OCI-LY7 (cell line): ENCODE measurements at regions of chr4 and their contacts with region 1.

Region 1: DNA sequence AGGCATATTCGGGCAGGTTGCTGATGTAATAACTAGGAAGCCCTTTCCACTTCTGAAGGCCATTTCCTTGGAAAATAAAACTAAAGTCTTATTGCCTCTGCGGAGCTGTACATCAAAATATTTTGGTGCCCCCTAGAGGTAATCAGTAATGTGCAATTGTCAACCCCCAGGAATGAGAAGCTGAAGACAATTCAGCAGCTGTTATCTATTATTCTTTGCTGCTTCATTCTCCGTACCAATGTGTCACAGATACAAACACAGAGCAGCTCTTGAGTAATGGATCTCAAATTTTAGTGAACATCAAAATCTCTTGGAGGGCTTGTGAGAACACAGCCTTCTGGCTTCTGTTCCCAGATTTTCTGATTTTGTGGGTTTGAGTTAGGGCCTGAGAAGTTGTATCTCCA is 3.5 kb upstream of the SLIT2 start:
- DNase-seq: peak; percentile 40
- H3K4me3 ChIP-seq: no peak overlapping the region
- H3K27ac ChIP-seq: no peak overlapping the region
- H3K4me1 ChIP-seq: no peaks in the 10 kb centered on the region
- CTCF ChIP-seq: peak; percentile 86

Region 2: GRCh38 chr4:19224820-19225219 is 1023.3 kb before region 1 on chr4:
- CTCF ChIA-PET with region 1: no interaction called
- POLR2A ChIA-PET with region 1: no interaction called
- intact Hi-C with region 1: loop called (anchors 10 kb)
- DNase-seq: peak; percentile 60
- H3K4me3 ChIP-seq: no peak overlapping the region
- H3K27ac ChIP-seq: no peak overlapping the region
- H3K4me1 ChIP-seq: no peaks in the 10 kb centered on the region
- CTCF ChIP-seq: peak; percentile 83

Region 3: DNA sequence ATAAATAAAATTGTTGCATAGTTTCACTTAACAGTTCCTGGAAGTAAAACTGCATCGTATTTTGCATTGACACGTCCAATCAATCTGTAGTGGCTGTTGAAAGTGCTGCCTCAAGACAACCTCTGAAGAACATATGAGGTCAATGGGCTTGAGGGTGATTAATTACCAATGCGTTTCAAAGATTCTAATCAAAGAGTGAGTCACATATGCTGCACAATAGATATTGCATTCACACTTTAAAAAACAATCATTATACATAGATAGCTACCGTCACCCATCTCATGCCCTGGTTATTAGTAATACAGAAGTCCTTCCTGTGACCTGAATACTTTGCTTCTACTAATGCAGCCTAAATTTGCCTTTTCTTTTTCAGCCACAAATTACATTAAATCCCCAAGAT is 739.7 kb before region 1 on chr4:
- CTCF ChIA-PET with region 1: no interaction called
- POLR2A ChIA-PET with region 1: no interaction called
- intact Hi-C with region 1: loop called (anchors 5 kb)
- DNase-seq: no peak
- H3K4me3 ChIP-seq: no peak overlapping the region
- H3K27ac ChIP-seq: no peak overlapping the region
- H3K4me1 ChIP-seq: no peaks in the 10 kb centered on the region
- CTCF ChIP-seq: no peak

Region 4: DNA sequence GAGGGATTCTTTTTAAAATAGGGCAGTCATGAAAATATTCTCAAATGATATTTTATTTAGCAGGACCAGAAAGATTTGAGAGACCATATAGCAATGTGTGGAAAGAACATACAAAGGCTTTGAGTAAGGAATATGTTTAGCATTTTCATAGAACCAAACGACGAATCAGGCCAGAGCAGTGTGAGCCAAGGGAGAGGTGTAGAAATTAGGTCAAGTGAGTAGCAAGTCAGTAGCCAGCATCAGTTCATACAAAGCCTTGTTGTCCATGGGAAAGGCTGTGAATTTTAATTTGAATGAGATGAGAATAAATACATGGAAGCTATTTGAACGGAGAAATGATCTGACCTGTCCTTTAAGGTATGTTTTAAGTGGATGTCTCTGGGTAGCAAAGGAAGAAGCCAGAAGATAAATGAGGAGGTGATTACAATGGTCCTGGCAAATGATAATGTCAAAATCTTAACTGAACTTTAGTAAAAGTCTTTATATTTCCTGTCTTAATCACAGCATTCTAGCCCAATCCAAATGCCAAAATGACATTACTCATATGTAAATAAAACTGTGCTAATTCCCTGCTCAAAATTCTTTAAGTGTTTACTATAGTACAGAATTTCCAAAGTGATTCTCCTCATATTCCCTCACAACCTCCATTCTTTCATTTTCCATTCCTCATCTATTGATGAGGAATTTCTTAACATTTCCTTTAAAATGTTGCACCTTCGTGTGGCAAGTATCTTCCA is 152.2 kb before region 1 on chr4:
- CTCF ChIA-PET with region 1: no interaction called
- POLR2A ChIA-PET with region 1: no interaction called
- intact Hi-C with region 1: no loop called
- DNase-seq: no peak
- H3K4me3 ChIP-seq: no peak overlapping the region
- H3K27ac ChIP-seq: no peak overlapping the region
- H3K4me1 ChIP-seq: no peaks in the 10 kb centered on the region
- CTCF ChIP-seq: no peak